CD8-positive, alpha-beta T cell (primary cell): ENCODE measurements at regions of chr2 and their contacts with region 1.

Region 1: DNA sequence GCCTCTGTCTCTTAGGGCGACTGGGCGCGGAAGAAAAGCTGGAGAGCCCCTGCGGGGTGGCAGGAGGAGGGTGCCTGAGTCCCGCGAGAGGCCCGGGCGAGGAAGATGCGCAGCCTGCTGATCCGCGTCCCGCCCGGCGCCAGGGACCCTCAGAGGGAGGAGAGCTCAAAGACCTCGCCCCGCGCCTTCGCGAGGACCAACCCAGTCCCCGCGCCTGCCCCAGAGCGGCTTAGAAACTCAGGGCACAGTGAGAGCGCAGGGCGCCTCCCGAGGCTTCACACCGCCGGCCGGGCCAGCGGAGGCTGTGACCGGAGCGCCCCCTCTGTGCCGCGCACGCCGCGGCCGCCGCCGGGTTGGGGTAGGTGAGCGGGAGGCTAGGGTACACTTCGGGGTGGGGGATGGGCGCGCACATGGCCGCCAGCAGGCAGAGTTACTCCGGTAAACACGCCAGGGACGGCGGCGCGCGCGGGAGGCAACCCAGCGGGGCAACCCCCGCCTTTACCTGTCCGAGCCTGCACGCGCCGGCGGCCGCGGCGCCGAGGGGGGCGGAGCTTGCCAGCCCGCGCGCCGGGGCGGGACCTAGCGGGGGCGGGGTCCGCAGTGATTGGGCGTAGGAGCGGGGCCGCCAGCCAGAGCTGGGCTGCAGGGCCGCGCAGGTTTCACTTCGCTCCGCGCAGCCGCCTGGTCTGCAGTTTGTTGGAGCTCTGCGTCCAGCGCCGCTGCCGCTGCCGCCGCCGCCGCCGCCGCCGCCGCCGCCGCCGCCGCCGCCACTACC is at the start of gene BCL2L11:
- DNase-seq: peak; percentile 81 to 94 (median 88)
- ATAC-seq: peak; percentile 71
- H3K4me3 ChIP-seq: peak within 1 kb of the TSS; percentile 90 to 91
- H3K4me3 Mint-ChIP-seq: peak within 1 kb of the TSS; percentile 90
- H3K27ac ChIP-seq: peak within 1 kb of the TSS; percentile 37 to 50
- H3K27ac Mint-ChIP-seq: peak within 1 kb of the TSS; percentile 72
- H3K4me1 ChIP-seq: peaks cover 48% of the 10 kb centered on the region
- H3K4me1 Mint-ChIP-seq: peaks cover 55% of the 10 kb centered on the region
- H3K27me3 ChIP-seq: peaks cover 23 to 43% of the 10 kb centered on the region in 2 experiments
- H3K27me3 Mint-ChIP-seq: peaks cover 24% of the 10 kb centered on the region
- CTCF ChIP-seq: no peak
- total RNA-seq, gene BCL2L11: 38.7 to 40.1 TPM

Region 2: GRCh38 chr2:110677530-110678456 is 442.6 kb before region 1 on chr2 and contains the start of gene BUB1:
- CTCF ChIA-PET with region 1: no interaction called
- POLR2A ChIA-PET with region 1: no interaction called
- intact Hi-C with region 1: loop called (anchors 5 kb)
- DNase-seq: peak; percentile 87 to 98 (median 95)
- ATAC-seq: peak; percentile 95
- H3K4me3 ChIP-seq: peak within 1 kb of the TSS; percentile 65 to 91
- H3K4me3 Mint-ChIP-seq: peak within 1 kb of the TSS; percentile 96
- H3K27ac ChIP-seq: peak within 1 kb of the TSS; percentile 66 to 67
- H3K27ac Mint-ChIP-seq: peak within 1 kb of the TSS; percentile 93
- H3K4me1 ChIP-seq: peaks cover 13% of the 10 kb centered on the region
- H3K4me1 Mint-ChIP-seq: peaks cover 27% of the 10 kb centered on the region
- H3K27me3 ChIP-seq: peaks cover 0 to 2% of the 10 kb centered on the region in 2 experiments
- H3K27me3 Mint-ChIP-seq: no peaks in the 10 kb centered on the region
- CTCF ChIP-seq: no peak
- total RNA-seq, gene BUB1: 2.4 to 3.1 TPM

Region 3: GRCh38 chr2:110853507-110853906 is 266.9 kb before region 1 on chr2:
- CTCF ChIA-PET with region 1: interaction called, 5 read pairs
- POLR2A ChIA-PET with region 1: interaction called, 15 read pairs
- intact Hi-C with region 1: loop called (anchors 2 kb)
- DNase-seq: peak in 7 of 9 experiments; percentile 37 to 84 (median 67)
- ATAC-seq: no peak
- H3K4me3 ChIP-seq: no peak overlapping the region
- H3K4me3 Mint-ChIP-seq: peak overlapping the region; percentile 12
- H3K27ac ChIP-seq: no peak overlapping the region
- H3K27ac Mint-ChIP-seq: peak overlapping the region; percentile 87
- H3K4me1 ChIP-seq: peaks cover 44% of the 10 kb centered on the region
- H3K4me1 Mint-ChIP-seq: peaks cover 64% of the 10 kb centered on the region
- H3K27me3 ChIP-seq: no peaks in the 10 kb centered on the region
- H3K27me3 Mint-ChIP-seq: no peaks in the 10 kb centered on the region
- CTCF ChIP-seq: peak; percentile 67

Region 4: GRCh38 chr2:111054791-111055691 is 65.4 kb before region 1 on chr2:
- CTCF ChIA-PET with region 1: no interaction called
- POLR2A ChIA-PET with region 1: no interaction called
- intact Hi-C with region 1: no loop called
- DNase-seq: peak in 1 of 9 experiments; percentile 44
- ATAC-seq: no peak
- H3K4me3 ChIP-seq: no peak overlapping the region
- H3K4me3 Mint-ChIP-seq: no peak overlapping the region
- H3K27ac ChIP-seq: no peak overlapping the region
- H3K27ac Mint-ChIP-seq: no peak overlapping the region
- H3K4me1 ChIP-seq: peaks cover 23% of the 10 kb centered on the region
- H3K4me1 Mint-ChIP-seq: peaks cover 30% of the 10 kb centered on the region
- H3K27me3 ChIP-seq: no peaks in the 10 kb centered on the region
- H3K27me3 Mint-ChIP-seq: no peaks in the 10 kb centered on the region
- CTCF ChIP-seq: no peak

Region 5: DNA sequence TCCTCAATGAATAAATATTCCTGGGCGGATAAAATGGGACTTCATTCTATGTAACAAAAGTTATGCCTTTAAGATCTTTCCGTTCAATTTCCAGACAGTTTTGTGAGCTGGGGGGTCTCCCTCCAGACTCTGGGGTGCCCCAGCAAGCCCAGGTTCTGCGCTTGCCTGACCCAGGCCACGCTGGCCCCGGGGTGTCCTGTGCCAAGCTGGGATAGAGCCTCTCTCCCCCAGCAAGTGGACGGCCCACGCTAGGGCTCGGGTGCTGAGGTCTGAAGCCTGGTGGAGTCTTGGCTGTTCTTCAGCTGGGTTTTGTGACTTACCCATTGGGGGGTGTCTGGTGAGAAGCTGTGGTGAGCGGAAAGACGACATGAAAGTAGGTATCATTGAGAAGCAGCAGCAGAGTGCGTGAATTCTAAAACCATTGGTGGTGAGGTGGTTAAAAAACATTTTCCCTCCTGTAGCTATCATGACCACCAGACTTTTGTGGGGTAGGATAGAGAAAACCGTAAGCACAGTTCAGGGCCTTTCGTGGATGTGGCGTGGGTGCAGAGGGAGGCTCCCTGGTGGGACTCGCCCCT is 416.7 kb after region 1 on chr2:
- CTCF ChIA-PET with region 1: no interaction called
- POLR2A ChIA-PET with region 1: no interaction called
- intact Hi-C with region 1: no loop called
- DNase-seq: peak in 2 of 9 experiments; percentile 14 to 41
- ATAC-seq: peak; percentile 46
- H3K4me3 ChIP-seq: no peak overlapping the region
- H3K4me3 Mint-ChIP-seq: no peak overlapping the region
- H3K27ac ChIP-seq: no peak overlapping the region
- H3K27ac Mint-ChIP-seq: no peak overlapping the region
- H3K4me1 ChIP-seq: no peaks in the 10 kb centered on the region
- H3K4me1 Mint-ChIP-seq: peaks cover 6% of the 10 kb centered on the region
- H3K27me3 ChIP-seq: no peaks in the 10 kb centered on the region
- H3K27me3 Mint-ChIP-seq: no peaks in the 10 kb centered on the region
- CTCF ChIP-seq: no peak

Region 6: GRCh38 chr2:111705711-111706336 is 585.4 kb after region 1 on chr2:
- CTCF ChIA-PET with region 1: no interaction called
- POLR2A ChIA-PET with region 1: no interaction called
- intact Hi-C with region 1: loop called in 1 of 2 experiments (anchors 5 kb)
- DNase-seq: peak in 3 of 9 experiments; percentile 12 to 35 (median 27)
- ATAC-seq: peak; percentile 49
- H3K4me3 ChIP-seq: no peak overlapping the region
- H3K4me3 Mint-ChIP-seq: no peak overlapping the region
- H3K27ac ChIP-seq: no peak overlapping the region
- H3K27ac Mint-ChIP-seq: no peak overlapping the region
- H3K4me1 ChIP-seq: peaks cover 3% of the 10 kb centered on the region
- H3K4me1 Mint-ChIP-seq: peaks cover 2% of the 10 kb centered on the region
- H3K27me3 ChIP-seq: no peaks in the 10 kb centered on the region
- H3K27me3 Mint-ChIP-seq: peaks cover 3% of the 10 kb centered on the region
- CTCF ChIP-seq: no peak

Region 7: DNA sequence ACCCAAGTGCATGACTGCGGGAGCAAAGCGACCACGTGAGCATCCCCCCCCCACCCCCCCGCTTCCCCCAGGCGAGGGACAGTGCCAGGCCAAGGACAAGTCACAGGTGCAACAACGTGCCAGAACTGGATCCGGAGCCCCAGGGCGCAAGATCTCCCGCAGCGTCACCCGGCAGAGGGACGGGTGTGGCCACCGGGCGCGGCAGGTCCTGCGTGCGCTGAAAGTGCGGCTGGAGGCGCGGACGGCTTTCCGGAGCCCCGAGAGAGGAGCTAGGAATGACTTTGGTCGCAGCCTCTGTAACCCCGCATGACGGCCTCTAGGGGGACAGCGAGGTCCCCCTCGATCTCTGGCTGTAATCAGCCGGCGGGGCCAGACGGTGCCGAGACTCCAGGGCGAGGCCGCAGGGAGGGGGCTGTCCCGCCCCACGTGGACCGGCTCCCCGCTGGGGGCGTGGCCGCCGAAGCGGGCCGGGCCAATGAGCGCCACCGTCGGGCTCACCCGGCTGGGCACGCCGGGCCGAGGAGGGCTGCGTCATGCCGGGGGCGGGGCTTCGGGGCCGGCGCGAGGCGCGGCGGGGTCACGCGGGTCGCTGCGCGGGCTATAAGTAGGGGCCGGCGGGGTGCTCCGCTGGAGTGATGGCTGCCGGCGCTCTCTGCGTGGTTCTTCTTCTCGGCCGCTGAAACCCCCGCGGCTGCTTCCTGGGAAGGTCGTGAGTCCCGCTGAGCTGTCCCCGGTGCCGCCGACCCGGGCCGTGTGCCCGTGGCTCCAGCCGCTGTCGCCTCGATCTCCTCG is 1525.1 kb after region 1 on chr2 and contains the start of gene SLC20A1:
- CTCF ChIA-PET with region 1: no interaction called
- POLR2A ChIA-PET with region 1: no interaction called
- intact Hi-C with region 1: loop called in 1 of 2 experiments (anchors 5 kb)
- DNase-seq: peak; percentile 96 to 100 (median 98)
- ATAC-seq: peak; percentile 91
- H3K4me3 ChIP-seq: peak within 1 kb of the TSS; percentile 84 to 90
- H3K4me3 Mint-ChIP-seq: peak within 1 kb of the TSS; percentile 85
- H3K27ac ChIP-seq: peak within 1 kb of the TSS; percentile 91
- H3K27ac Mint-ChIP-seq: peak within 1 kb of the TSS; percentile 89
- H3K4me1 ChIP-seq: peaks cover 50% of the 10 kb centered on the region
- H3K4me1 Mint-ChIP-seq: peaks cover 56% of the 10 kb centered on the region
- H3K27me3 ChIP-seq: no peaks in the 10 kb centered on the region
- H3K27me3 Mint-ChIP-seq: no peaks in the 10 kb centered on the region
- CTCF ChIP-seq: peak; percentile 55
- total RNA-seq, gene SLC20A1: 144 to 145 TPM